ENCODE measurements at regions of chr20 and their contacts with region 1.

Region 1: DNA sequence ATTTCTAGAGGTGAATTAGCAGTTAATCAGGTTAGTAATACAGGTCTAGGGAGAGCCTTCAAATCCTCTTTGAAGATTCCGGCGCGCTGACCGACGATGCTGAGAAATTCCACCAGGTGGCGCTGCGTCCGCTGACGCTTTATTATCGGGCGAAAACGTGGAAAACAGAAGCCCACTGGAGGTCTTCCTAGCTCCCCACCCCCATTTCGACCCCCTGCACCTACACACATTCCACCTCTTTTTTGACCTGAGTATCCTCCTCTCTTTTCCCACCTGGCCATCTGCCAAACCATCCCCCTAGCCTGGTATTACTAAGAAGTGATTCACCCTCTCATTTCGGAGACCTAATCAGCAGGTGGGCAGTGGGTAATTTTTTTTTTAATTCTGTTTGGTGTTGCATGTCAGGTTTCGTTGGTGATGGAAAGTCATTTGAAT is 65.4 kb upstream of the RIN2 start:
- DNase-seq: no peak
- H3K4me3 Mint-ChIP-seq: no peak overlapping the region
- H3K27ac Mint-ChIP-seq: no peak overlapping the region
- H3K4me1 Mint-ChIP-seq: no peaks in the 10 kb centered on the region
- H3K27me3 Mint-ChIP-seq: peaks cover 5% of the 10 kb centered on the region

Region 2: DNA sequence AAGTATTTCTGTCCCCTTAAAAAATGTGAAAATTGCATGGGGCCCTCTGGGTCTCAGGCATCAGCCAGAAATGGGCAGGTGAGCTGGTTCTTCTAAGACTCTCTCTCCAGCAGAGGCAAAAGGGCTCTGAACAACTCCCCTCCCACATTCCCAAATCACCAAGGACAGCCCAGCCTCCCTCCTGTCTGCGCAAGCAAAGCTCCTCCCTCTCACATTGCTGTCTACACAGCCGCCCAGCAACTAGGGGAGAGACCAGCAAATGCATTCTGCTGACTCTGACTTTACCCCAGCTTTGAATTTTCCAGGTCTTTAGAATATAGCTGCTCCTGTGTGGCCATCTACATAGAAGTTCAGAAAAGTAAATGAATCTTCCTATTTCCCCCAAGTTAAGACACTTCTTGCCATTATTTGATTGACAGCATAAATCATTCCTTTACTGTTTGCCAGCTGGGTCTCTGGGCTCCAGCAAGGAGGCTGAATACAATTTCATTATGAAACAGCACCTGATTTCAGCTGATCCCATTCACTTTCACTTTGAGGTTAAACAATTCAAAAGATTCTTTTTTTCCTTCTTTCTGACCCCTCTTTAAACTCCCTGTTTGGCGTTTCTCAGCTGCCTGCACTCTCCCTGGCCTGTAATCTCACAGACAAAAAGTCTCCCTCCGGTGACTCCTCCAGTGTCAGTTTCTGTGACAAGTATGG is 140.4 kb before region 1 on chr20:
- intact Hi-C with region 1: no loop called
- DNase-seq: no peak
- H3K4me3 Mint-ChIP-seq: no peak overlapping the region
- H3K27ac Mint-ChIP-seq: no peak overlapping the region
- H3K4me1 Mint-ChIP-seq: no peaks in the 10 kb centered on the region
- H3K27me3 Mint-ChIP-seq: no peaks in the 10 kb centered on the region

Region 3: GRCh38 chr20:19712721-19713260 is 20.1 kb after region 1 on chr20:
- intact Hi-C with region 1: no loop called
- DNase-seq: no peak
- H3K4me3 Mint-ChIP-seq: no peak overlapping the region
- H3K27ac Mint-ChIP-seq: no peak overlapping the region
- H3K4me1 Mint-ChIP-seq: no peaks in the 10 kb centered on the region
- H3K27me3 Mint-ChIP-seq: no peaks in the 10 kb centered on the region

Region 4: DNA sequence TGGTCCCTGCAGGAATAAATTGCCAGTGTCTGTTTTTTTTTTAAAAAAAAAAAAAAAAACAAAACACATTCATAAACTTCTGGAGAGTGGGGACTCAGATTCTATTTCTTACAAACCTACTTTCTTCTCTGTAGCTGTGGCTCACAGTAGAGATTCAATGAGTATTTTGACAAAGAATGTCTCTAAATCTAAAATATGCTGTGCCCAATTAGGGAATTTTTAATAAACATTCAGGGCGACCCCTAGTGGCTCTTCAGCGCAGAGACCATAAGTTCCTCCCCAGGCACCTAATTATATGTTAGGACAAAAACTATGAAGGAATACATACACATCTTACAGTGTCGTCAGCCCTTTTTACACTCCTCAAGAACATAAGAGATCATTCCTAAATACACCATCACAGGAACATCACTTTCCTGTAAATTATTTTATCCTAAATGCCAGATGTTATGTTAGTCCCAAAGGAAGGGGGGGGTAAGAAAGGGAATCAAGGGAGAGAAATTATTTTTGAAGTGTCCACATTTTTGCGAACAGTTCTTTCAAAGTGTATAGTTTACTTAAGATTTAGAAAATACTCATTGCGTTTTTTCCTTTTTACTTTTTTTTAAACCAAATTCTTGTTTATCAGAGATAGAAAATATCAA is 302.6 kb after region 1 on chr20:
- intact Hi-C with region 1: loop called (anchors 1 kb)
- DNase-seq: no peak
- H3K4me3 Mint-ChIP-seq: no peak overlapping the region
- H3K27ac Mint-ChIP-seq: no peak overlapping the region
- H3K4me1 Mint-ChIP-seq: no peaks in the 10 kb centered on the region
- H3K27me3 Mint-ChIP-seq: peaks cover 4% of the 10 kb centered on the region